Ovary (tissue), 10 donors: ENCODE measurements at regions of chr7 and their contacts with region 1.

Region 1: DNA sequence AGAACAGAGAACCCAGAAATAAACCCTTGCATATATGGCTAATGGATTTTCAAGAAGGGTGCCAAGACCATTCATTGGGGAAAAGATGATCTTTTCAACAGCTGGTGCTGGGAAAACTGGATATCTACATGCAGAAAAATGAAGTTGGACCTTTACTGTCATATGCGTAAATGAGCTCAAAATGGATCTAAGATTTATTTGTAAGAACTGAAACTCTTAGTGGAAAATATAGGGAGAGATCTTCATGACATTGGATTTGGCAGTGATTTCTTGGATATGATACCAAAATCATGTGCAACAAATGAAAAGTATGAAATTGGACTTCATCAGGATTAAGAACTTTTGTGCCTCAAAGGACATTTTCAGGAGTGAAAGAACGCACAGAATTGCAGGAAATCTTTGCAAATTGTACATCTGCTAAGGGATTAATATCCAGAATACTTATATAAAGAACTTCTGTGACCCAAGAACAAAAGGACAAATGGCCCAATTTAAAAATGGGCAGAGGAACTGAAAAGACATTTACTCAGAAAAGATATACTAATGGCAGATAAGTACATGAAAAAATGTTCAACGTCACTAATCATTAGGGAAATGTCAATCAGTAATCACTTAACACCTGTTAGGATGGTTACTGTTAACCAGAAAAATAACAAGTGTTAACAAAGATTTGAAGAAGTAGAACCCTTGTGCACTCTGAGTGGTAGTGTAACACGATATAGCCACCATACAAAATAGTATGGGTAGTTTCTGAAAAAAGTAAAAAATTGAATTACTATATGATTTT is 6.1 kb downstream of the DBF4 start:
- DNase-seq: no peak
- H3K4me3 ChIP-seq: no peak overlapping the region
- H3K27ac ChIP-seq: no peak overlapping the region
- H3K4me1 ChIP-seq: peaks cover 3% of the 10 kb centered on the region
- H3K27me3 ChIP-seq: no peaks in the 10 kb centered on the region
- CTCF ChIP-seq: no peak
- EP300 ChIP-seq: no peak
- POLR2A ChIP-seq: no peak

Region 2: GRCh38 chr7:87517136-87517815 is 365.1 kb before region 1 on chr7:
- intact Hi-C with region 1: loop called in 1 of 4 experiments (anchors 5 kb)
- DNase-seq: no peak
- H3K4me3 ChIP-seq: no peak overlapping the region
- H3K27ac ChIP-seq: no peak overlapping the region
- H3K4me1 ChIP-seq: no peaks in the 10 kb centered on the region
- H3K27me3 ChIP-seq: no peaks in the 10 kb centered on the region
- CTCF ChIP-seq: no peak
- EP300 ChIP-seq: no peak
- POLR2A ChIP-seq: no peak

Region 3: DNA sequence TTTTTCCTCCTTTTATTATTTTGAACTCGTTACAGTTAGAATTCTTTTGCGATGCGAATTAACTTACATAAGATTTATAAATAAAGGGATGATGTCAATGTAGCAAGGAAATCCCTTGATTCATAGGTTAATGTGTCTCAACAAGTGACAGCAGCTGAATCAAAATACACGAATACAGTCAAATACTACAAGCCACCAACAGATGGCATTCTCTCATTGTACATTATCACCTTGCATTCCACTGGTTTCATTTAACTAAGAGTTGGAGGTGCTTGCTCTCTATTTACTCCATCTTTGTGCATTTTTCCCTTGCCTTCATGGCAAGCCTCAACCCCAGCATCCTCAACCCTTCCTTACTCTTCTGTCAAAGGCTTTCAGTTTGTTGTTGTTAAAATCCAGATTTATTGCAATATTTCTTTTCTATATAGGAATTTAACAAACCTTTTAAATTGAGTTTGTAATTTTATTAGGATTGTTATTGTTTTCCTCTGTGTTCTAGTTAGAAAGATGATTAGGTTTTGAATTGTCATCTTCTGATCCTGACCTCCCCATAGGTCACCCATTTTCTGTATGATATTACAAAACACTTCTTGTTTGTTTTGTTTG is 84.4 kb before region 1 on chr7:
- intact Hi-C with region 1: no loop called
- DNase-seq: no peak
- H3K4me3 ChIP-seq: no peak overlapping the region
- H3K27ac ChIP-seq: no peak overlapping the region
- H3K4me1 ChIP-seq: no peaks in the 10 kb centered on the region
- H3K27me3 ChIP-seq: no peaks in the 10 kb centered on the region
- CTCF ChIP-seq: peak; percentile 5 to 45 (median 43)
- EP300 ChIP-seq: no peak
- POLR2A ChIP-seq: no peak